ENCODE measurements at regions of chr9 and their contacts with region 1.

Region 1: GRCh38 chr9:76658535-76659231 is 105.6 kb upstream of the PCA3 start:
- DNase-seq: peak; percentile 60
- H3K4me3 Mint-ChIP-seq: no peak overlapping the region
- H3K27ac Mint-ChIP-seq: no peak overlapping the region
- H3K4me1 Mint-ChIP-seq: peaks cover 34% of the 10 kb centered on the region
- H3K27me3 Mint-ChIP-seq: no peaks in the 10 kb centered on the region
- CTCF ChIP-seq: peak; percentile 60

Region 2: DNA sequence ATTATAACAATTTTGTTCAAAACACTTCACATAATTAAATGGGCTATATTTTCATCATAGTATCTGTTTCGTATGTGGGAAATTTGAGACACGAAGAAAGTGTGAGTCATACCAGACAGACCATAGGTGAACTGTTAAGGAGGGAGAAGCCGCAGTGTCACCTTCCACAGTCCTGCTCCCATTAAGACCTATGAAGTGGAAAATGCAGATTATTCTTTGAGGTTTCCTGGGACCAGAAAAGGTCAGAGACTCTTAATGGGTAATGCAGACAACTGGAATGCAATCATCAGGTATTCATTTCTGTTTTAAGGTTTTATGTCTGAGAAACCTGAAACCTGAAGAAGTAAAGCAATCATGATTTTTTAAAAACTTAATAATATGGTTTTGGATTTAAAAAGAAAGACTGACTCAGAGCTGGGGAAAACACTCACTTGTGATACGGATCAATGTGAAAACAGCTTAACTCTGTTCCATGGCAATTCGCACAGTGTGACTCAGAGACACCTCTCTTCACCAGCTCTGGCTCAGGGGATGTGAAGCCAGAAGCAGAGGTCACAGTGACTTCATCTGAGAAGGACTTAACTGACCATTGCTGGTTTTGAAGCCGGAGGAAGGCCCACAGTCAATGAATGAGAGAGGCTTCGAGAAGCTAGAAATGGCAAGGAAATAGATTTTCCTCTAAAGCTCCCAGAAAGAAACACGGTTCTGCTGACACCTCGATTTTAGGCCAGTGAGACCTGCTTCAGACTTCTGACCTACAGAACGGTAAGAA is 216.9 kb before region 1 on chr9:
- CTCF ChIA-PET with region 1: interaction called, 226 read pairs
- POLR2A ChIA-PET with region 1: interaction called, 4 read pairs
- intact Hi-C with region 1: no loop called
- DNase-seq: peak; percentile 24
- H3K4me3 Mint-ChIP-seq: no peak overlapping the region
- H3K27ac Mint-ChIP-seq: no peak overlapping the region
- H3K4me1 Mint-ChIP-seq: no peaks in the 10 kb centered on the region
- H3K27me3 Mint-ChIP-seq: no peaks in the 10 kb centered on the region
- CTCF ChIP-seq: no peak

Region 3: DNA sequence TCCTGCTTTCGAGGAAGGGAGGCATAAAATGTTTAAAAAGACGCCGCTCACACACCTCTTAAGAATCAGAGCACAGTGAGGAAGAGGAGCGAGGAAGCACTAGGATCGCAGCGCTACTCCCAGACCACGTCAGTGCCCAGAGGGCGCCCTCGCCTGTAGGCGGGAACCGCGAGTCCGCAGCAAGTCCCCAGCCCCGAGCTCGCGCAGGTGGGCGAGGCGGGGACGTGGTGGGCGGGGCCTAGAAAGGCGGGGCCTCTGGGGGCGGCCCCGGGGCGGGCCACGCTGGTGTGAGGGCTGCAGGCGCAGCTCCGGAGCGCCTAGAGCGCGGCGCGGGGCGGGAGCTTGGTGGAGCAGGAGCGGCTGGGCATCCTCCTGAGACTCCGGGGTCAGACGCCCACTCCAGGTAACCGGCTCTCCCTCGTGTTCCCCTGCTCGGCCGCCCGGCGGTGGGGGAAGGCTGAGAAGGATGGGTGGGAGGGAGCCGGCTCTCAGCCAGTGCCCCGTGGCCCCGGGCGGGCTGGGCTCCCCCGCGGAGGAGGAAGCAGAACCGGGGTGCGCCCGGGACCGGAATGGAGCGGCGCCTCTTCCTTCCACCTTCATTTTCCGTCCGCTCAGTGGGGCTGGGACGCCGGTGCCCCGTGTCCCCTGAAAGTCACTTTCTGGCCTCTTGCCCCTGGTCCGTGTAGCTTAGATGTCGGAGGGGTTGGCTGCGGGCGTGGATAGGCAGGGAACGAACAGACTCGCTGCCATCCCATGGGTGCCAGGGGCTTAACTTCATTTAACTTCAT is 199.6 kb before region 1 on chr9 and contains the start of gene GCNT1:
- CTCF ChIA-PET with region 1: interaction called, 89 read pairs
- POLR2A ChIA-PET with region 1: interaction called, 5 read pairs
- intact Hi-C with region 1: loop called (anchors 1 kb)
- DNase-seq: peak; percentile 90
- H3K4me3 Mint-ChIP-seq: peak within 1 kb of the TSS; percentile 84
- H3K27ac Mint-ChIP-seq: peak within 1 kb of the TSS; percentile 6
- H3K4me1 Mint-ChIP-seq: peaks cover 14% of the 10 kb centered on the region
- H3K27me3 Mint-ChIP-seq: no peaks in the 10 kb centered on the region
- CTCF ChIP-seq: peak; percentile 15
- total RNA-seq, gene GCNT1: 11.5 and 12.4 TPM in 2 replicates

Region 4: GRCh38 chr9:76537150-76537646 is 121.5 kb before region 1 on chr9:
- CTCF ChIA-PET with region 1: no interaction called
- POLR2A ChIA-PET with region 1: no interaction called
- intact Hi-C with region 1: no loop called
- DNase-seq: no peak
- H3K4me3 Mint-ChIP-seq: no peak overlapping the region
- H3K27ac Mint-ChIP-seq: no peak overlapping the region
- H3K4me1 Mint-ChIP-seq: peaks cover 25% of the 10 kb centered on the region
- H3K27me3 Mint-ChIP-seq: no peaks in the 10 kb centered on the region
- CTCF ChIP-seq: no peak

Region 5: GRCh38 chr9:76704593-76705204 is 46.0 kb after region 1 on chr9:
- CTCF ChIA-PET with region 1: interaction called, 285 read pairs
- POLR2A ChIA-PET with region 1: interaction called, 3 read pairs
- intact Hi-C with region 1: loop called (anchors 1 kb)
- DNase-seq: peak; percentile 78
- H3K4me3 Mint-ChIP-seq: no peak overlapping the region
- H3K27ac Mint-ChIP-seq: no peak overlapping the region
- H3K4me1 Mint-ChIP-seq: peaks cover 14% of the 10 kb centered on the region
- H3K27me3 Mint-ChIP-seq: peaks cover 36% of the 10 kb centered on the region
- CTCF ChIP-seq: peak; percentile 69

Measured in MCF 10A (cell line).